Activated CD8-positive, alpha-beta T cell treated with anti-CD3 and anti-CD28 coated beads, Interleukin-2, amount 10 ng/mL, durations not matched to agents 7 days and 5 days (primary cell): ENCODE measurements at regions of chr6 and their contacts with region 1.

Region 1: DNA sequence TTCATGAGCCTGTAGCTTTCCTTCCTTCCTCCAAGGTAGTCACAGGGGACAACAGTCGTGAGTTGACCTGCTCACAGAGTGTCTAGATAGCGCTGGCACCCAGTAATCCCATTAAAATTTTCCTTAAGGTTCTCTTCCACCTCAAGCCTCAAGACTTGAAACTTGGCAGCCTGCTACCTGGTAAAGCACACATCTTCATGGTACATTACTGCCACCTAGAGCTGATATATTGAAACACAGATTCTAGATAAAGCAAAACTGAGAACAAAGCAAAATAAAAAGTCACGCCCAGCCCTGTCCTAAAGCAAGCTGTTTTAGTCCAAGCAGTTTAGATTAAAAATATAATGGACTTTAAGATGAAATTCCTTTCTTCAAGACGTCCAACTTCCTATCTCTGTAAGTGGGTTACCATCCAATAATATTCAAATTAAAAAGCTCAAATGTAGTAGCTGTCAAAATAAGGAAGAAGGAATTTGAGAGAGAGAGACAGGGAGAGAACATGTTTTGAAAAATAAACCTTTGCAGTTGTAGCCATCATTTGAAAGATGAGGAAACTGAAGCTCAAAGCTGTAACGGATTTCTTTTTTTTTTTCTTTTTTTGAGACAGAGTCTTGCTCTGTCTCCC is 50.7 kb upstream of the CD83 start:
- DNase-seq: peak; percentile 31
- ATAC-seq: peak; percentile 84
- H3K4me3 Mint-ChIP-seq: no peak overlapping the region
- H3K27ac Mint-ChIP-seq: no peak overlapping the region
- H3K4me1 Mint-ChIP-seq: peaks cover 13% of the 10 kb centered on the region
- H3K27me3 Mint-ChIP-seq: peaks cover 21% of the 10 kb centered on the region

Region 2: DNA sequence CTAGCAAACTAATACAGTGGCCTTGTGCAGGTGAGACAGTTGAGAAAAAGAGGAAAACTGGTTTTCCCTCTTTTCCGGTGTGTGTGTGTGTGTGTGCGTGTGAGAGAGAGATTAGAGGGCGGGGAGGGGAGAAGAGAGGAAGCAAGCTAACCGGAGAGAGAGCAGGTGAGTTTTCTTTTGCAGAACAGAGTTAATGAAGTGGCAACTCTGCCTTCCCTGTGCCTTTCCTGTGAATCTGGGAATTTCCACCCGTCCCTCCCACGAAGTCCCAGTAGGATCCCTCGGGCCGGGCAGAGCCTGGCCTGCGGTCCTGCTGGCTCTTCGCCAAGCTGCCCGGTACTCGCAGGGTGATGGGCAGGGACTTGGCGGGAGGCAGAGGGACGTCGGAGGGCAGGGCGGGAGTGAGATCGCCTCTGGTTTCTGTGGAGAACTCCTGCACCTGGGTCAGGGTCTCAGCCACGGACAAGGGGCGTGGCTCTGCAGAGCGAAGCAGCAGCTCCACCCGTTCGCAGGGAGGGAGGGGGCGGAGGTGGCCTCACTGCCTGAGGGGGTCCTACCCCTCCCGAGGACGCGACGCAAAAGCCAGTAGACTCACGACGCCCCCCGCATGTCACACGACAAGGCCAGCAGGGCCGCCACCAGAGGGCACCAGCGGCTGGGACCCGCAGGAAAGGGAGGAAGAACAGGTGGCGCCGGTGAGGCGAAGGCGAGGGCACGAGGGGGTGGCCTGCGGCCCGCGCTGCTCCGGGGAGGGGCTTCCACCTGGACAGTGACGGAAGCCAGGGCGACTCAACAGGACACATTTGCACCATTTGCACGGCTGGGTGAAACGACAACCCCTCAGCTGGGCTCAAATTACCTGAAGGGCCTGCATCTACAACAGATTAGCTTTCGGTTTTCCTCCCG is 193.4 kb before region 1 on chr6:
- CTCF ChIA-PET with region 1: interaction called, 27 read pairs
- POLR2A ChIA-PET with region 1: no interaction called
- DNase-seq: peak; percentile 79
- ATAC-seq: peak; percentile 98
- H3K4me3 Mint-ChIP-seq: peak overlapping the region; percentile 63
- H3K27ac Mint-ChIP-seq: peak overlapping the region; percentile 10
- H3K4me1 Mint-ChIP-seq: peaks cover 10% of the 10 kb centered on the region
- H3K27me3 Mint-ChIP-seq: peaks cover 8% of the 10 kb centered on the region

Region 3: DNA sequence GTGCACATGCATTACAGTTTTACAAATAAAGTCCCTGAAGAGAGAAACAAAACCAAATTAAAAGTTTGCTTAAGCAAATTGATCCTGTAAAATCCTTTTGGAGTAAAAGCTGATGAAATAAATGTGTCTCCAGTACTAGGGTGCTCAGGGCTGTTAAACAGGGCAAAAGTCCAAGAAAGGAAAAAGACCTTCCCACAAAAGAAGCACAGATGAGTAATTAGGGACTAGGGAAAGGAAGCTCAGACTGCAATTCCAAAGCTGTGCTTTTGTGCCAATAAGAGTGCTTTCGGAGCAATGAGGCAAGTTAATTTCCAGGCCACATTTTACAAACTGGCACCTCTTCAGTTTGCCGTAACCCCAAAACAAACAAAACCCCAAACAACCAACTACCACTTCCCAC is 152.5 kb before region 1 on chr6:
- CTCF ChIA-PET with region 1: interaction called, 67 read pairs
- POLR2A ChIA-PET with region 1: no interaction called
- DNase-seq: no peak
- ATAC-seq: no peak
- H3K4me3 Mint-ChIP-seq: no peak overlapping the region
- H3K27ac Mint-ChIP-seq: no peak overlapping the region
- H3K4me1 Mint-ChIP-seq: no peaks in the 10 kb centered on the region
- H3K27me3 Mint-ChIP-seq: peaks cover 52% of the 10 kb centered on the region

Region 4: DNA sequence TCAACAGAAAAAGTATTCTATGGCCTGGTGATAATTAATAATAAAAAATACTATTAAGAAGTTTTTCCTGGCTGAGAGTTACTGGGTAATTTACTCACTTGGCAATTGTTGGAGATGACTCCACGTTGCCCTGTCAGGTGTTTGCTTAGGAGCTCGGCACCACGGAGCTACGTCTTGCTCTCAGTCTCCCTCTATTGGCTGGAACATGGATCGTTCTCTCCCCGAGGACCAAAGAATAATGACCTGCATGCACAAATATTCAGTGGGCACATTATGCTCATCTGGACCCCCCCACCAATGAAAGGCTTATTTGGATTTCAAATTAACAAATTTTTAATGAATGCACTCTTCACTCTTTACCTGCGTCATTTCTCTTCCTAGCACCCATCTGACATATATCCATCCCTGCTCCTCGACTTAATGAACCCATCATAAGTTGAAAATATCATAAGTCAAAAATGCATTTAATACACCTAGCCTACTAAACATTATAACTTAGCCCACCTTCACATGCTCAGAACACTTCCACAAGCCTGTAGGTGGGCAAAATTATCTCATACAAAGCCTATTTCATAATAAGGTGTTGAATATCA is 20.3 kb before region 1 on chr6:
- CTCF ChIA-PET with region 1: interaction called, 101 read pairs
- POLR2A ChIA-PET with region 1: no interaction called
- DNase-seq: peak; percentile 59
- ATAC-seq: peak; percentile 65
- H3K4me3 Mint-ChIP-seq: no peak overlapping the region
- H3K27ac Mint-ChIP-seq: no peak overlapping the region
- H3K4me1 Mint-ChIP-seq: no peaks in the 10 kb centered on the region
- H3K27me3 Mint-ChIP-seq: peaks cover 33% of the 10 kb centered on the region

Region 5: DNA sequence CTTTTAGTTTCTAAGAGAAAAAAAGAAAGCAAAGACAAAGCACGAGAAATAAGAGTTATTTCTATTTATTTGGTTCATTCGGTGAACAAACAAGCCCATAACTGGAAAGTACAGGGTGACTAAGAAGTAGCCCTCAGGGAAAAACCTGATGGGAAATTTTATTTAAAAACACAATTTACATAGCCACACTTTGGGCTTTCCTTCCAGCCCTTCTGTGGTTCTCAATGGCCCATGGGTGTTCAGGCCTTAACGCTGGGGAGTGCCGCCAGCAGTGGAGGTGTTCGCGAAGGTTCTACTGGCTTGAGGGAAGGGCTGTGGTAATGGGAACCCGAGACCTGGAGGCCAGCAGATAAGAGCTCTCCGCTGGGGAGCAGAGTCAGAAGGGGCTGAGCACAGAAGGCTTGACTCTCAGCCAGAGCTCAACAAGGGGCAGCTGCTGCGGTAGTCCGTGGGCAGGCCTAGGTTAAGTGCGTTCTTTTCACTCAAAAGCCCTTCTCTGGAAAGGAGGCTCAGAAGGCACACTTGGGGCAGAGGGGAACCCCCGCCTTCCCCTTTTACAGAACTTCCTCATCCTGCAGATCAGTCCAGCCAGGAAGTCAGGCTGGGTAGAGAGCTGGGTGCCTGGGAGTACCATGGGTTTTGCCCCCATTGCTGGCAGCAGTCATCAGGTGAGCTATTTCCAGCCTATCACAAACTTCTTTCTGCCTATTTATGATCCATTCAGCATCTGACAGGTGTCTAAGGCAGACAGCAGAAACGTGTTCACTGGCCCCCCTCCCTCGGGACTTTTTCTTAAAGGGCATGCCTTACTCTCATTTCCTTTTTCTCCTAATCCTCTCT is 41.9 kb after region 1 on chr6:
- CTCF ChIA-PET with region 1: interaction called, 18 read pairs
- POLR2A ChIA-PET with region 1: no interaction called
- DNase-seq: no peak
- ATAC-seq: peak; percentile 52
- H3K4me3 Mint-ChIP-seq: no peak overlapping the region
- H3K27ac Mint-ChIP-seq: peak overlapping the region; percentile 61
- H3K4me1 Mint-ChIP-seq: peaks cover 30% of the 10 kb centered on the region
- H3K27me3 Mint-ChIP-seq: peaks cover 8% of the 10 kb centered on the region

Region 6: GRCh38 chr6:14129575-14129974 is 62.7 kb after region 1 on chr6:
- CTCF ChIA-PET with region 1: interaction called, 13 read pairs
- POLR2A ChIA-PET with region 1: no interaction called
- DNase-seq: peak; percentile 66
- ATAC-seq: peak; percentile 72
- H3K4me3 Mint-ChIP-seq: no peak overlapping the region
- H3K27ac Mint-ChIP-seq: no peak overlapping the region
- H3K4me1 Mint-ChIP-seq: peaks cover 18% of the 10 kb centered on the region
- H3K27me3 Mint-ChIP-seq: no peaks in the 10 kb centered on the region

Region 7: GRCh38 chr6:14144678-14145113 is 77.8 kb after region 1 on chr6:
- CTCF ChIA-PET with region 1: interaction called, 18 read pairs
- POLR2A ChIA-PET with region 1: no interaction called
- DNase-seq: peak; percentile 79
- ATAC-seq: peak; percentile 88
- H3K4me3 Mint-ChIP-seq: no peak overlapping the region
- H3K27ac Mint-ChIP-seq: no peak overlapping the region
- H3K4me1 Mint-ChIP-seq: peaks cover 6% of the 10 kb centered on the region
- H3K27me3 Mint-ChIP-seq: no peaks in the 10 kb centered on the region

Region 8: DNA sequence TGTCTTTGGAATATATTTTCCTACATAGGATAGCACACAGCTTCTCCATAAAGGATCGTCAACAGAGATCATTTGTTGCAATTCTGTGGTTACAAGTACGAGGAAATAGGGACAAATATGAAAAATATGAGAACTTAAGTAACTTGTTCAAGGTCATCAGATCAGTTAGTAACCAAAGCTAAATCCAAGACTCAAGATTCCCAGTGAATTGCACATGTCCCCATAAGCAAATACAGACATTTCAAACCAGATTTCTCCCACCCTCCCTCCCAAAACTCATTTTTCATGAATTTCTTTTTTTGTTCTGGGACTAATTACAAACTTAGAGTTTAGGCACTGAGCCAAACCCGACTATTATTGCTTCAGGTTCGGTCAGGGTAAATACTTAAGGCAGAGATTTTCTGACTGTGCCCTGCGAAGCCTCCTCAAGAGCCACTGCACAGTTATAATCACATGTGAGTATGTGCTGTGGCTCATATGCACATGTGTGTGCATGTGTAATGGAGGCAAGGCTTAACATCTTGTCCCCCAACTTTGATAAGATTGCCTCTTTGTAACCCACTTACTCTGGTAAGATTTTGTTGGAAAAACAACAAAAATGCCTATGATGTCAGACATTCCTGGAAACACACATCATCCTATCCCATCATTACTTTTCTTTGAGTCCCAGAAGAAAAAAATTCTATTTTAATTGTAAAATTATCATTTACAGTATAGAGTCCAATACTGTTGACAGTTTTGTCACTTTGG is 266.8 kb after region 1 on chr6:
- CTCF ChIA-PET with region 1: no interaction called
- POLR2A ChIA-PET with region 1: no interaction called
- DNase-seq: no peak
- ATAC-seq: no peak
- H3K4me3 Mint-ChIP-seq: no peak overlapping the region
- H3K27ac Mint-ChIP-seq: no peak overlapping the region
- H3K4me1 Mint-ChIP-seq: peaks cover 2% of the 10 kb centered on the region
- H3K27me3 Mint-ChIP-seq: peaks cover 6% of the 10 kb centered on the region